BJ (cell line): ENCODE measurements at regions of chr13 and their contacts with region 1.

Region 1: GRCh38 chr13:102580552-102581169 is 16.1 kb upstream of the TPP2 start:
- DNase-seq: peak; percentile 15
- H3K4me3 ChIP-seq: no peak overlapping the region
- H3K27me3 ChIP-seq: peaks cover 10% of the 10 kb centered on the region
- CTCF ChIP-seq: peak; percentile 68

Region 2: DNA sequence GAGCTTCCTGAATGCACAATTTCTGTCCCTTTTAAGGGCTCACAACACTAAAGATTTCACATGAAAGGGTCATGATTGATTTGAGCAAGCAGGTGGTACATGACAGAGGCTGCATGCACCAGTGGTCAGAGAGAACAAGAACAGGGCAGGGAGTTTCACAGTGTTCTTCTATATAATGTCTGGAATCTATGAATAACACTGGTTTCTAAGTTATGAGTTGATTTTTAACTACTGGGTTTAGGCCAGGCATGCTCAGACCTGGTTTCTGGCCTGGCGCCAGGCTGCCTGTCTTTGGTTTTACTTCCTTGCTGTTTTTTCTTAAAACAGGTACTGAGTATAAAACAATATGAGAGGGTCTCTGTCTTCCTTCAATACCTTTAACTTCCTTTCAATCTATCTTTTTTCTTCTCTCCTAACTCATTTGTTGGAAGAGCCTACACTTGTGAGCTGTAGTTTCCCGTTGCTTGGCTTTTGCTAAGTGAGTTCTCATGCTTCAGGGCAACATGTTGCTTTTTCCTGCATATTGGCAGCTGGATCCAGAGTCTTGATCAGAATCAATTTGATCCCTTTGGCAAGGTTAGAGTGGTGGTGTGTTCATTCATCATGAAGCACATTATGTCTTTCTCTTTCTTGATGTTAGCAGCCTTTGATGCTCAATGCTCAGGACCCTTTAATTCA is 140.3 kb before region 1 on chr13:
- CTCF ChIA-PET with region 1: no interaction called
- POLR2A ChIA-PET with region 1: no interaction called
- DNase-seq: no peak
- H3K4me3 ChIP-seq: no peak overlapping the region
- H3K27me3 ChIP-seq: no peaks in the 10 kb centered on the region
- CTCF ChIP-seq: no peak

Region 3: GRCh38 chr13:102591988-102592781 is 11.5 kb after region 1 on chr13:
- CTCF ChIA-PET with region 1: interaction called, 14 read pairs
- POLR2A ChIA-PET with region 1: no interaction called
- DNase-seq: peak; percentile 20
- H3K4me3 ChIP-seq: peak overlapping the region; percentile 50
- H3K27me3 ChIP-seq: no peaks in the 10 kb centered on the region
- CTCF ChIP-seq: peak; percentile 77

Region 4: GRCh38 chr13:102724923-102725322 is 144.3 kb after region 1 on chr13:
- CTCF ChIA-PET with region 1: interaction called, 21 read pairs
- POLR2A ChIA-PET with region 1: no interaction called
- DNase-seq: no peak
- H3K4me3 ChIP-seq: no peak overlapping the region
- H3K27me3 ChIP-seq: peaks cover 2% of the 10 kb centered on the region; the same call in 1 of the 2 replicates
- CTCF ChIP-seq: peak; percentile 53

Region 5: DNA sequence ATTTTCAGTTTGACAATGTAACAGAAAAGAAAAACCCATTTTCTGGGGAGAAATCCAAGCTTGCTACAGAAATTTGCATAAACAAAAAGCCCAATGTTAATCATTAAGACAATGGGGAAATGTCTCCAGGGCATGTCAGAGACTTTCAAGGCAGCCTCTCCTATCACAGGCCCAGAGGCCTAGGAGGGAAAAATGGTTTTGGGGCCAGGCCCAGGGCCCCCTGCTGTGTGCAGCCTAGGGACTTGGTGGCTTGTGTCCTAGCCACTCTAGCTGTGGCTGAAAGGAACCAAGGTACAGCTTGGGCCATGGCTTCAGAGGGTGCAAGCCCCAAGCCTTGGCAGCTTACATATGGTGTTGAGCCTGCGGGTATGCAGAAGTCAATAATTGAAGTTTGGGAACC is 200.9 kb after region 1 on chr13:
- CTCF ChIA-PET with region 1: no interaction called
- POLR2A ChIA-PET with region 1: no interaction called
- DNase-seq: no peak
- H3K4me3 ChIP-seq: no peak overlapping the region
- H3K27me3 ChIP-seq: no peaks in the 10 kb centered on the region
- CTCF ChIP-seq: no peak

Region 6: DNA sequence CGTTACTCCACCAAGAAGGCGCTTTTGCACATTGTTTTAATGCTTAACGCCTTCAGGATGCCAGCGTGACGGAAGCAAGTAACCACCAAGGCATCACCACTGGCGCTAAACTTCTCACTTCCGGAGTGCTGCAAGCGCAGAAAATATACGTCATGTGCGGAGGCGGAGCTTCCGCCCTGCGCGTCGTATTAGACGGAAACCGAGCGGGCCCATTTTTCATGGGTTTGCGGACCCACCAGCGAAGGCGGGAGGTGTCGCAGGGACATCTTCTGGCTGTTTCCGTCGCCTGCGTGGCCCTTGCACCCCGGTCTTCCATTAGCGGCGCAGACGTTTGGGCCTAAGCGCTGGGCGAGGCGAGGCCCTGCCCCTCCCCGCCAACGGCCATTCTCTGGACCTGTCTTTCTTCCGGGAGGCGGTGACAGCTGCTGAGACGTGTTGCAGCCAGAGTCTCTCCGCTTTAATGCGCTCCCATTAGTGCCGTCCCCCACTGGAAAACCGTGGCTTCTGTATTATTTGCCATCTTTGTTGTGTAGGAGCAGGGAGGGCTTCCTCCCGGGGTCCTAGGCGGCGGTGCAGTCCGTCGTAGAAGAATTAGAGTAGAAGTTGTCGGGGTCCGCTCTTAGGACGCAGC is 265.1 kb after region 1 on chr13 and contains the start of gene ERCC5:
- CTCF ChIA-PET with region 1: interaction called, 42 read pairs
- POLR2A ChIA-PET with region 1: no interaction called
- DNase-seq: peak; percentile 76
- H3K4me3 ChIP-seq: peak within 1 kb of the TSS; percentile 98
- H3K27me3 ChIP-seq: no peaks in the 10 kb centered on the region
- CTCF ChIP-seq: no peak
- polyA plus RNA-seq, gene ERCC5: 21.7 and 35.1 TPM in 2 replicates